Activated CD8-positive, alpha-beta memory T cell treated with anti-CD3 and anti-CD28 coated beads, Interleukin-2, amount 10 ng/mL, durations not matched to agents 7 days and 5 days (primary cell): ENCODE measurements at regions of chr19 and their contacts with region 1.

Region 1: DNA sequence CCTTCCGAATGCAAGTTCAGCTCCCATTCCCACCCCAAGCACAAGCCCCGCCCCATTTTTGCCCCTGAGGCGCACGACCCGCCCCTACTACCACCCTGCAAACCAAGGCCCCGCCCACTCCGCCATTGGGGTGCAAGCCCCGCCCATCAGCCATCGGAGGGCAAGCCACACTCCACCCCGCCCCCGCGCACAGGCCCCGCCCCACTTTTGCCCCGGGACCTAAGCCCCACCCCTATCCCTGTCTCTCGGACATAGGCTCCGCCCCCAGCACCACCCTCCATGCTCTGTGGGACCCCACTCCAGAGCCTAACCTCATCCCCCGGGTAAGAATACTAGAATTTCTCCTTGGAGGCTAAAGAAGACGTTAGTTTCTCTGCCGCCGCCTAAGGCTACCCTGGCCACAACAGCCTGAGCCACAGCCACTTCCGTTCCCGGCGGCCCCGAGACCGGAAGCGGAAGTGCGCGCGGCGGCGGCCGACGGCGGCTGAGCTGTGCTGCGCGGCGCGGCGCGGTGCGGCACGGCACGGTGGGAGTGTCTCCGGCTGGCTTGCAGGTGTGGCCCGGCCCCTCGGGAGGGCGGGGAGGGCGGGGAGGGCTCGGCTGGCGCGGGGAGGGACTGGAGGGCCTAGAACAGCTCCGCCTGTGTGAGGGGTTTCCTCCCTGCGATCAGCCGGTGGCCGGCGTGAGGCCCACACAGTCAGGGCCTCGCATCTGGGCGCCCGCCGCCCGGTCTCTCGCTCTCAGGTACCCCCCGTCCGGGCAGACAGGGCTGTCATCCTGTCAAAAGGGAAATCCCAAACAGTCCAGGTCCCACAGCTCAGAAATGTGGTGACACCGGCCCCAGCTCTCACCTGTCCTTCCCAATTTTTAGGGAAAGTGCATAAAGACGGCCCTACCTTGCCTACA is at the start of gene ZNF333:
- DNase-seq: peak; percentile 100
- ATAC-seq: peak; percentile 95
- H3K4me3 Mint-ChIP-seq: peak within 1 kb of the TSS; percentile 87
- H3K27ac Mint-ChIP-seq: peak within 1 kb of the TSS; percentile 100
- H3K4me1 Mint-ChIP-seq: peaks cover 12% of the 10 kb centered on the region
- H3K27me3 Mint-ChIP-seq: no peaks in the 10 kb centered on the region
- total RNA-seq, gene ZNF333: 8.5 to 11.1 TPM

Region 2: DNA sequence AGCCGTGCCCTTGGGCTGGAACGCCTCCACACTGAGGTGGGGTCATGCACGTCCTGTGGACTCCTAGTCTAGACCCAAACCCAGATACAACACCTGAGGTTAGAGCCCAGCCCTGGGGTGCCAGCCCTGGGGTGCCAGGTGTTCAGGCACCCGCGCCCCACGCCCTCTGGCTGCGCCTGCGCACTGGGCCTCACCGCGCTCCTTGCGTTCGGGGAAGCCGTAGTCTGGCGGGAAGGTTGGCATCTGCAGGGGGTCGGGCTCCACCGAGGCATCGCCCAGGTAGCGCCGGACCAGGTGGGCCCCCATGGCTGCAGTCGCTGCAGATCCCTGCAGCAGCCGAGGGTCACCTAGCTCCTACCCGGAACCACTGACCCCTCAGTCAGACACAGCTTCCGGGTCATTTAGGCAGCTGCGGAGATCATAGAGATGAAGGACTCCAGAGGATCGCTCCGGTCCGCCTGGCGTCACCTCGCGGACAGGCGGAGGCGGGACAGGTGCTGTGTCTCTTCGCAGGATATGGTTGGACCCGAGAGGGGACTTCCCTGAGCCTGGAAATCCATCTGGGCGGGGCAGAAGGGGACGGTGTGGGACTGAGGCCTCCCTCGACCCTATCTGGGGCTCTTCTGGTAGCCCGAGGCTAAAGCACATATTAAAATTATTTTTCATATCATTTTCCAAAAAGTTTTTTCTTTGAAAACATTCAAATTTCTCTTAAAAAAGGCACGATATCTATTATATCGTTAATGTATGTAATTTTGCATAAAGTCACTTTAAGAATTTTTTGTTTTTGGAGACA is 118.0 kb before region 1 on chr19 and contains the start of gene NDUFB7:
- CTCF ChIA-PET with region 1: interaction called, 226 read pairs
- DNase-seq: peak; percentile 95
- ATAC-seq: peak; percentile 98
- H3K4me3 Mint-ChIP-seq: peak within 1 kb of the TSS; percentile 97
- H3K27ac Mint-ChIP-seq: peak within 1 kb of the TSS; percentile 92
- H3K4me1 Mint-ChIP-seq: peaks cover 43% of the 10 kb centered on the region
- H3K27me3 Mint-ChIP-seq: no peaks in the 10 kb centered on the region
- total RNA-seq, gene NDUFB7: 113 to 129 TPM

Region 3: DNA sequence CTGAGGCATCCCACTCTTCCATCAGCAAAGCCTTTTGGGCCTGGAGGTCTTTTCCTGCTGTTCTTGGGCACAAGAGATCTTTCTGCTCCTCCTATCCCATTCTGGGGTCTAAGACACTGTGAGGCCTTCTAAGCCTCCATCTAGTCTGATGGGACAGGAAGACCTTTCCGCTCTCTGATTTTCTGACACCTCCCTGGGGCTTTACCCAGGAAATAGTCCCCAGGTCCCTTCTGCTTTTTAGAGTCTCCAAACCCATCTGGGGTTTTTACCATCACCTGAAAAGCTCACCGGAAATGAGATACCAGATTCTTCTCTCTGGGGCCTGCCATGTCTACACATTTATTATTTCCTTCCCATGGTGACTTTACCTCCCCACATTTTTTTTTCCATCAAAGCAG is 85.9 kb before region 1 on chr19:
- CTCF ChIA-PET with region 1: no interaction called
- DNase-seq: no peak
- ATAC-seq: no peak
- H3K4me3 Mint-ChIP-seq: no peak overlapping the region
- H3K27ac Mint-ChIP-seq: no peak overlapping the region
- H3K4me1 Mint-ChIP-seq: peaks cover 1% of the 10 kb centered on the region
- H3K27me3 Mint-ChIP-seq: no peaks in the 10 kb centered on the region

Region 4: DNA sequence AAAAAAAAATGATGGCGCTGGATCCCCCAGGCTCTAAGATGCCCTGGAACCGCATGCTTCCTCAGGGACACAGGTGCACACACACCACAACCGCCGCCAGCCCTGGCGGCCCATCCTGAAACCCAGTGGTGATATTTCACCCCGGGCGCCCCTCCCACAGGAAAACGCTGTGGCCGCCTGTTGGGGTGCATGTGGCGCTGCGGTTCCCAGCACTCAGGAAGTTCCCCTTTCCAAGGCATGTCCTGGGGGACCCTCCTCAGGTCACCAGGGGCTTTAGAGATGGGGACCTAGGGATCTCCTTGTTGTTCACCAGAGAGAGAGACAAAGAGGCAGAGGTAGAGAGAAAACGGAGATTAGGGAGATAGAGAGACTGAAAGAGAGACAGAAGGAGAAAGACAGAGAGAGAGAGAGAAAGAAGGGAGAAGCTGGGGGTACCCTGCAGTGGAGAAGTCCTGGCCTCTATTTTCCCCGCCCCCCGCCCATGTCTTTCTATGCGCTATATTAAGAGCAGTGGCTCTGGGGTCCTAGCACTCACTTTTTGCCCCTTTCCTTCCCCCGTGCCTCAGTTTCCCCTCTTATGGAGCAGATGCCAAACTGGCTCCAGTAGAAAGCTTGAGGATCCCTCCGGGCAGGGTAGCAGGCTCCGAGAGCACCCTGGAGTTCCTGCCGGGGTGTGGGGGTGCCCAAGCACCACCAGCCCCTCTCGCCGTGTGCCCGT is 86.2 kb after region 1 on chr19:
- CTCF ChIA-PET with region 1: no interaction called
- DNase-seq: peak; percentile 29
- ATAC-seq: no peak
- H3K4me3 Mint-ChIP-seq: no peak overlapping the region
- H3K27ac Mint-ChIP-seq: no peak overlapping the region
- H3K4me1 Mint-ChIP-seq: peaks cover 5% of the 10 kb centered on the region
- H3K27me3 Mint-ChIP-seq: peaks cover 30% of the 10 kb centered on the region